ENCODE measurements at regions of chr15 and their contacts with region 1.

Region 1: DNA sequence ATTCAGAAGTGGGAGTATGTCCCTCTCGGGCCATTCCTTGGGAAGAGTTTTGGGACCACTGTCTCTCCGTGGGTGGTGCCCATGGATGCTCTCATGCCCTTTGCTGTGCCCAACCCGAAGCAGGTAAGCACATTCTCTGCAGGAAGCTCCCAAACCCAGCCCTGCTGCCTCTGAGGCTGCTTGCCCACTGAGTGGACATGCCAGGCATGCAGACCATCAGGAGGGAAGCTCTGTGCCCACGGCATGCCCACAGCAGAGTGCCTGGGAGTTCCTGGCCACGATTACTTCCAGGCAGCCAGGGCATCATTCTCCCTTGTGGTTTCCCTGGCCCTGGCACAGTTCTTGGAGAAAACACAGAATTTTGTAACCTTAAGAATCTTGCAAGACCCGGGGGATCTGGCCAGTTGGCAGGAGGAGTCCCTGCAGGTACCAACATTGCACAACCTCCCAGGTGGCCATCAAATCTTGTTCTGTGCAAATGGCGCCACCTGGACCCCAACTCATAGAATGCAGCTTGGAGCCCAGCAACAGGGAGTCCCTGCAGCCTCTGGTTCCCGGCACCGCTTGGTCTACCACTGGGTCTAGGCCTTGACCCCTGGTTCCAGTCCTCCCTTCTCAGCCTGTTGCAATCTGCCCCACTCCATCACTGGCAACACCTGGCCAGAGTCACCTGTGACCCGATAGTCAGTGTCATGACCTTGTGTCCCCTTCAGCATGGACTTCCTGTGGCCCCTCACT is 20.4 kb downstream of the FAH start:
- DNase-seq: peak; percentile 65
- H3K4me3 ChIP-seq: no peak overlapping the region
- H3K27ac ChIP-seq: no peak overlapping the region
- H3K4me1 ChIP-seq: peaks cover 18% of the 10 kb centered on the region
- H3K27me3 ChIP-seq: no peaks in the 10 kb centered on the region
- CTCF ChIP-seq: peak; percentile 56 to 88

Region 2: DNA sequence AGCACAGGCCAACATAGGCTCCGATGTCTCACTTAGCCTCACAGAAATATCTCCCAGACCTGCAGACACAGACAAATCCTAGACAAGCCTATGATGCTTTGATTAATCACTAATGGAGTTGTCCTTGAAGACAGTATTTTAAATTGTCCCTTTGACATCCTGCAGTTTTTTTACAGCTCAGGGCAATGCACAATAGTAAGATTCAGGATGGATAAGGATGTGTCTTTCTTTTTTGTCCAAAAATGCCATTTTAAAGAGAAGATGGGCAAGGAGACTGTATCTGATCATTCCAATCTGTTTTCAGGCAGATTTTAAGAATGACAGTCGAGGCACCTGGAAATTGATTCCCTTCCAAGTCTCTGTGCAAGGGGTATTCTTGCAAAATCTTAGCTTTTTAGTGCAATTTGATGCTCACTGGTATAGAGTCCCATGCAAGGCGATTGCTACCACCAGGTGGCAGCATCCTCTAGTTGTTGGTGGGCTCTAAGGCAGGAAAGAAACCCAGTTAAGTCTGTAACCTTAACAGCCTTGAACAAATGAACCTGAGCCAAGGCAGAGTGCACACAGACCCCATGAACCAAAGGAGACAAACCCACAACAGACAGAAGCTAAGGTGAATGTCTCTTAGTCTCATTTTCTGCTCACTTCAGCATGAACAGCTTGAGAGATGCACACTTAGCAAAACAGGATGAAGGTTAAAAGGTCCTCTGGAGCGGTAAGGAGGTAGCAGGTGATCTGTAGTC is 792.3 kb before region 1 on chr15:
- CTCF ChIA-PET with region 1: no interaction called
- dilution Hi-C with region 1: no loop called
- in situ Hi-C with region 1: no loop called
- intact Hi-C with region 1: loop called (anchors 1 kb)
- DNase-seq: peak; percentile 42
- H3K4me3 ChIP-seq: no peak overlapping the region
- H3K27ac ChIP-seq: no peak overlapping the region
- H3K4me1 ChIP-seq: no peaks in the 10 kb centered on the region
- H3K27me3 ChIP-seq: no peaks in the 10 kb centered on the region
- CTCF ChIP-seq: peak; percentile 88 to 95

Region 3: DNA sequence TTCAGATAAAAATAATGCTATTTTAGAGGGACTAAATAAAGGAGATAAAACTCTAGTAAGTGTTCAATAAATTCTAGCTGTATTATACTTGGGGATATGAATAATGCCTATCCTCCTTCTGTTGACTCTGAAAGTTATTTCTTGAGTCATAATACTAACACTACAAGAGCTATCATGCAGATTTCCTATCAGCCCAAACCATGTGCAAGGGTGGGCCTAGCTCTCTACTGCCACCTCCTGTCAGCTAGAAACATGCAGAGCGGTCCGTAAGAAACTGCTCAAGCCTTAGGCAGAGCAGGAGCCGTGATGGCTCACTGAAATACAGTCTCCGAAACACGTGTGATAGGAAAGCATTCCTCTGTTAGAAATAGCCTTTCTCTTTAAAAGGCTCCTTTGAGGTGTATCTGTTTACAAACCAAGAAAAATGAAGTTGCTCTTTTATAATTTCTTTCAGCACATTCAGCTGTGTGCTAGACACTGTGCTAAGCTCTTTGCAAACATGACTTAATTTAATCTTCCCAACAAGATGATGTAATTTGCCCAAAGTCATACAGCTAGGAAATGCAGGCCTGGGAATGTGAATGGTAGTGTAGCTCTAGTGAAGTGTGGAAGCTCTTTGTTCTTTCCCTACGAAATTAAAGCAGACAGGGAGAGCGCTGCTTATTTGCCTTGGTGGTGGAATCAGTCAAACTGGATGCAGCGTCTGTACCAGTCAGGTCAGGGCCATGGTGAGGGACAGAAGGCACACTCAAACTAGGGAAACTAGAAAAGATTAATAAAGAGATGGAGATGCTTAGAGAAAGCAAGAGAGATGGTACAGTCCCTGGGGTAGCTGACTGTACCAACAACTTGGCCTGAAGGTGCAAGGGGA is 319.5 kb before region 1 on chr15:
- CTCF ChIA-PET with region 1: no interaction called
- dilution Hi-C with region 1: no loop called
- in situ Hi-C with region 1: no loop called
- intact Hi-C with region 1: loop called (anchors 2 kb)
- DNase-seq: peak; percentile 81
- H3K4me3 ChIP-seq: no peak overlapping the region
- H3K27ac ChIP-seq: no peak overlapping the region
- H3K4me1 ChIP-seq: peaks cover 13% of the 10 kb centered on the region
- H3K27me3 ChIP-seq: no peaks in the 10 kb centered on the region
- CTCF ChIP-seq: peak; percentile 99 to 100

Region 4: GRCh38 chr15:79896637-79897379 is 276.4 kb before region 1 on chr15 and contains the start of gene MTHFS:
- CTCF ChIA-PET with region 1: no interaction called
- dilution Hi-C with region 1: no loop called
- in situ Hi-C with region 1: no loop called
- intact Hi-C with region 1: loop called (anchors 1 kb)
- DNase-seq: peak; percentile 80
- H3K4me3 ChIP-seq: peak within 1 kb of the TSS; percentile 51 to 73 (median 59)
- H3K27ac ChIP-seq: peak within 1 kb of the TSS; percentile 76
- H3K4me1 ChIP-seq: peaks cover 12% of the 10 kb centered on the region
- H3K27me3 ChIP-seq: no peaks in the 10 kb centered on the region
- CTCF ChIP-seq: peak; percentile 21 to 64
- total RNA-seq, gene MTHFS: 21.7 to 32.8 TPM

Region 5: GRCh38 chr15:80234883-80235282 is 61.7 kb after region 1 on chr15:
- CTCF ChIA-PET with region 1: no interaction called
- dilution Hi-C with region 1: no loop called
- in situ Hi-C with region 1: no loop called
- intact Hi-C with region 1: no loop called
- DNase-seq: peak; percentile 21
- H3K4me3 ChIP-seq: no peak overlapping the region
- H3K27ac ChIP-seq: no peak overlapping the region
- H3K4me1 ChIP-seq: no peaks in the 10 kb centered on the region
- H3K27me3 ChIP-seq: no peaks in the 10 kb centered on the region
- CTCF ChIP-seq: peak; percentile 60 to 70